ENCODE measurements at regions of chr14 and their contacts with region 1.

Region 1: GRCh38 chr14:61252369-61253063 is 28.6 kb downstream of the TMEM30B start:
- DNase-seq: peak; percentile 98
- ATAC-seq: peak; percentile 93
- H3K4me3 ChIP-seq: 0 out of 2 replicates have a peak overlapping the region, but pooled peaks have one; percentile 5
- H3K27ac ChIP-seq: peak overlapping the region; percentile 80
- H3K4me1 ChIP-seq: peaks cover 27% of the 10 kb centered on the region
- H3K27me3 ChIP-seq: no peaks in the 10 kb centered on the region
- CTCF ChIP-seq: peak; percentile 99

Region 2: DNA sequence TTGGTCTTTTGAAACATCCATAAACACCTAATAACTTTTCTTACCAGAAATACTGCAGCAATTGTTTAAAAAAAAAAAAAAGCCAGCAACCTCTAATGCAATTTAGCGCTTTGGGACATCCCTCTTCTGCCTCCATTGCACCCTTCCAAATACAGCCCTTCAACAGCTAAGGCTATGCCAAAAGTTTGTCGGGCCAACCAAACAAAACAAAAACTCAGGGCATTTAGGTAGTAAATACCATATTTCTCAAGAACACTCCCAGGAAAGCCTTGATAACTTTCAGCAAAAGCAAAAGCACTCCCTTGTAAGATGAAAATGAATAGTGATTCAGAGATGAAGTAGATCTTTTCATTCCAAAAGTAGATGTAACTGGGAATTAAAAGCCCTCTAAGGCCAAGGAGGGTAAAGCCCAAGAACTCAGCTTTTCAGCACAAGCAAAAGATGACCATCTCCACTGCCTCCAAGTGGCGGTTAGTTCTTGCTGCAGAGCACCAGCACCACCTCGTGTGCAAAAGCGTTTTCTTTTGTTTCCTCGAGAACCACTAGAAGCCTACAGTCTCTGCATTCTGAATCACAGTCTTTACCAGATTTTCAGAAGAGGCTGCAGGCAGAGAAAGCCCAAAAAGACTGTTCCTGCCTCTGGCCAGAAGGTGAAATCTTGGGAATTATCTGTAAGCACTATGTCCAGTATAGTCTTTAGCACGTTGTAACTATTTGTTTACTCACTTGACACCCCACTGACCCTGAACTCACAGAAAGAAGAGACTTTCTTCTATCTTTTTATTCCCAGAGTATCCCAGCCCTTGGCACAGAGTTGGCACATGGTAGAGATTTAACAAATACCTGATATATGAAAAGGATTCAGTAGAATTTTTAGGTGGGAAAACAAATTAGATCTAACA is 690.4 kb before region 1 on chr14:
- CTCF ChIA-PET with region 1: no interaction called
- POLR2A ChIA-PET with region 1: no interaction called
- intact Hi-C with region 1: loop called (anchors 1 kb)
- DNase-seq: peak; percentile 94
- ATAC-seq: peak; percentile 97
- H3K4me3 ChIP-seq: no peak overlapping the region
- H3K27ac ChIP-seq: no peak overlapping the region
- H3K4me1 ChIP-seq: peaks cover 4% of the 10 kb centered on the region; the same call in 1 of the 2 replicates
- H3K27me3 ChIP-seq: no peaks in the 10 kb centered on the region
- CTCF ChIP-seq: peak; percentile 98

Region 3: DNA sequence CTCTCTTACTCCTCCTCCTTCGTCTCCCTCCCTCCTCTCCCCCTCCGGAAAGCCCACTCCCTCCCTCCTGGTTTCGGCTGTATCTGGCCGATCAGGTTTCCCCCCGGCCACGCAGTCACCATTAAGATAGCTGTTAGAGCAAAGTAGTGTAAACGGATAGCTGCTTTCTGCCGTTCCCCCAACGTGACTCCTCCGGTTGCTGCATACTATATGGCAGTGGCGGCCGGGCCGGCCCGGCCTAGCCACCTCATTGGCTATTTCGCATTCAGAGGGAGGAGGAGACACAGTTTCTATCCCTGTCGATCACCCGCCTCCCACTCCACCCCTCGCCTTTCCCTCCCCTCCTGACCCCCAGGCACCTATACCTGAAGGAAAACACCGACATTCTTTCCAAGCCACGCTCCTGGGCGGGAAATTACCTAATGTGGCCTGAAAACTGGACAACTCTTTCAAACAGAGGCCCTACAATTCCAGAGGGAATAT is 528.3 kb before region 1 on chr14 and contains the start of gene SIX4:
- CTCF ChIA-PET with region 1: interaction called, 3 read pairs
- POLR2A ChIA-PET with region 1: no interaction called
- intact Hi-C with region 1: loop called (anchors 1 kb)
- DNase-seq: peak; percentile 98
- ATAC-seq: peak; percentile 70
- H3K4me3 ChIP-seq: peak within 1 kb of the TSS; percentile 86
- H3K27ac ChIP-seq: peak within 1 kb of the TSS; percentile 38
- H3K4me1 ChIP-seq: peaks cover 20% of the 10 kb centered on the region
- H3K27me3 ChIP-seq: no peaks in the 10 kb centered on the region
- CTCF ChIP-seq: no peak
- total RNA-seq, gene SIX4: 29.2 and 33.2 TPM in 2 replicates

Region 4: GRCh38 chr14:60980811-60981632 is 271.5 kb before region 1 on chr14 and contains the starts of genes SLC38A6 and TRMT5:
- CTCF ChIA-PET with region 1: no interaction called
- POLR2A ChIA-PET with region 1: no interaction called
- intact Hi-C with region 1: loop called (anchors 2 kb)
- DNase-seq: peak; percentile 99
- ATAC-seq: peak; percentile 92
- H3K4me3 ChIP-seq: peak within 1 kb of the TSS; percentile 93
- H3K27ac ChIP-seq: peak within 1 kb of the TSS; percentile 71
- H3K4me1 ChIP-seq: peaks cover 57% of the 10 kb centered on the region
- H3K27me3 ChIP-seq: no peaks in the 10 kb centered on the region
- CTCF ChIP-seq: no peak
- total RNA-seq, gene SLC38A6: 24.8 and 28.0 TPM in 2 replicates
- total RNA-seq, gene TRMT5: 12.8 and 15.8 TPM in 2 replicates

Region 5: DNA sequence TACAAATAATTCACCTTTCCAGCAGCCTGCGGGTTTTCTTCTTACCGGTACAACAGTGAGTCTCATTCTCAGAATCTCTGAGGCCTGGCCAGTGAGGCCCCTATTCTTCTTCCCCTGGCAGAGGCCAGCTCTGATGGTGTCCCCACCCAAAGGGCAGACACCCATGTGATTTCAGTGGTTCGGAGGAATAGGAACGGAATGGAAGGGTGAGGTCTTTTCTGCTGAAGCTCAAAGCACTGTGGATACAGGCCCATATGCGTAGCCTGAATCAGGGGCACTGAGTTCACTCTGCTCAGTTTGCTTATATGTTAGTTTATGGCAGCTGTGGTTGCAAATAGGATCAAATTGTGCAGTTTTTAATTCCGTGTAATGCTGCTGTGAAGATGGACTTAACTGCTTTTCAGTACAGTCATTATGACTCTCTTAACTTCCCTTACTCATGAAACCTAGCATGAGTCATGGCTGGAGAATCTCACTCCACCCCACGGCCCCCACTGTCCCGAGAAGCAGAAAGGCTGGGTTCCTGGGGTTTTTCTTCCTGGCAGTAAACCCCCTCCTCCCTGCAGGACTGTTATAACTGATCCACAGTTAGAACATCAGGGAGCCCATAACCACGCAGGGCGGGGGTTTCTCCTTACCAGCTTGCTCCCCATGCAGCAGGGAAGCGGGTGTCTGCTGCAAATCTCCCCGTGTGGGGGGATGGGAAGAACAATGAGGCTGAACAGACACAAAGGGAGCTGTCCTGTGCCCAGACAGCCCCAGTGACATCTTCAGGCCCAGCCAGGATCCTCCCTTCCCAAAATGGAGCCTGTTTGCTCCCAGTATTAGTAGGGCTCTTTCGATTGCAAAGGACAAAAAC is 148.8 kb before region 1 on chr14:
- CTCF ChIA-PET with region 1: interaction called, 3 read pairs
- POLR2A ChIA-PET with region 1: no interaction called
- intact Hi-C with region 1: loop called (anchors 2 kb)
- DNase-seq: peak; percentile 99
- ATAC-seq: peak; percentile 86
- H3K4me3 ChIP-seq: peak overlapping the region; percentile 17; the same call in 1 of the 2 replicates
- H3K27ac ChIP-seq: peak overlapping the region; percentile 96
- H3K4me1 ChIP-seq: peaks cover 45% of the 10 kb centered on the region
- H3K27me3 ChIP-seq: no peaks in the 10 kb centered on the region
- CTCF ChIP-seq: no peak

Region 6: GRCh38 chr14:61218767-61219166 is 33.7 kb before region 1 on chr14:
- CTCF ChIA-PET with region 1: interaction called, 3 read pairs
- POLR2A ChIA-PET with region 1: no interaction called
- intact Hi-C with region 1: loop called (anchors 1 kb)
- DNase-seq: no peak
- ATAC-seq: peak; percentile 39
- H3K4me3 ChIP-seq: peak overlapping the region; percentile 21; the same call in 1 of the 2 replicates
- H3K27ac ChIP-seq: peak overlapping the region; percentile 75
- H3K4me1 ChIP-seq: peaks cover 39% of the 10 kb centered on the region
- H3K27me3 ChIP-seq: no peaks in the 10 kb centered on the region
- CTCF ChIP-seq: no peak

Region 7: DNA sequence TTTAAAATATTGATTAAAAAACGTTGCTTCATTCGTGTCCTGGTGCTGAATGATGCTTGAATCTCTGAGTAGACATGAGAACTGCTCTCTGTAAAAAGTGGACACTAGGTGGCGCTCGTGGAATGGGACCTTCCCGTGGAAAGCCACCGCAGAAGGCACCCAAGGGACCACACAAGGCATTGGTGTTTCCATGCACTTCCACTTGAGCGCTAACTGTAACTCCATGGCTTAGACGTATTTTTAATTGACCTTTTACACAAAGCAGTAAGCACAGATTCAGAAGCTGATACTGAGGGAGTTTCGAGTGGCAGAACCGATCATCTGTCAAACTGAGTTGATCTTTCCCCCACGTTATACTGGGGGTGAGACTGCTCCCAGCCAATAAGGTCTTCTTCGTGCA is 204.2 kb after region 1 on chr14:
- CTCF ChIA-PET with region 1: interaction called, 15 read pairs
- POLR2A ChIA-PET with region 1: no interaction called
- intact Hi-C with region 1: no loop called
- DNase-seq: peak; percentile 95
- ATAC-seq: peak; percentile 88
- H3K4me3 ChIP-seq: no peak overlapping the region
- H3K27ac ChIP-seq: no peak overlapping the region
- H3K4me1 ChIP-seq: peaks cover 13% of the 10 kb centered on the region
- H3K27me3 ChIP-seq: no peaks in the 10 kb centered on the region
- CTCF ChIP-seq: peak; percentile 96

Measured in PC-3 (cell line).